Activated CD8-positive, alpha-beta T cell treated with anti-CD3 and anti-CD28 coated beads, Interleukin-2, amount 10 ng/mL, durations not matched to agents 7 days and 5 days (primary cell): ENCODE measurements at regions of chr15 and their contacts with region 1.

Region 1: DNA sequence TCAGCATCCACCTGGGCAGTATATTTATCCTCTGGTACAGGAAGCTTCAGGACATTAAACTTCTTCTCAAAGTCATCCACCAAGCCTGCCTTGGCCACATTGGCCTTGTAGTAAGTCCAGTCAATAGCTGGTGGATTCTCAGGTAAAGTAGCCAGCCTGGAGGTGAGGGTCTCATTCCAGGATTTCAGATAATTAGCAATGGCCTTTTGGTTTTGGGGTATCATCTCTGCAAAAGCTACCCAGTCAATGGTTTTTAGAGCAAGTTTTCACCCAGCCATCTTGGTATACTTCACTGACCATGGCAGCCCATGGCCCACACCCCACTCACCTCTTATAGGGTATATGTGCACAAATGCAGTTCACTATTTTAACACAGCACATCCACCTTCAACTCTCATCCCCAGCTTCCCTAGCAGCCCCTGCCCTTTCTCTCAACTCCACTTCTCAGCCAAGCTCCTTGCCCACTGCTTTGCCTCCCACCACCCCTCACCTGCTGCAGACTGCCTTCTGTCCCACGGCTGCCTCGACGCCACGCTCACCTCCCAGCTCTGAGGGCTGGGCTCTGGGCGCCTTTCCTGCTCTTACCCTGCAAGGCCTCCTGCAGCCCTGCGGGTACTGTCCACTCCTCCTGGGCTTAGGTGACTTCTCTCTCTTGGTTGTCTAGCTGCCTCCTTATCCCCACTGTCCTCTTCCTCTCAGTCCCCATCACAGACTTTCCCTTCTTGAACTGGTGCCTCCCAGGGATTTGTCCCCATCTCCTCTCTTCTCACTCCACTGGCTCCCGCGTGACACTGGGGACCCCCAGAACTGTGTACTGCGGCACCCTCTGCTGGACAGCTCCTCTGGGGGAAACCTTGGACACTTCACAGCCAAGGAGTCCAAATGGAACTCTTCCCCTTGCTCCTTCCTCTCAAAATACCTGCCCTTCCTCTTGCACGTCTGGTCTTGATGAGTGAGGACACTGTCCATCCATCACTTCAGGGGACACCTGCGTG is 1.7 kb upstream of the TGM5 start:
- DNase-seq: peak; percentile 63
- ATAC-seq: peak; percentile 59
- H3K4me3 Mint-ChIP-seq: no peak overlapping the region
- H3K27ac Mint-ChIP-seq: no peak overlapping the region
- H3K4me1 Mint-ChIP-seq: peaks cover 22% of the 10 kb centered on the region
- H3K27me3 Mint-ChIP-seq: peaks cover 28% of the 10 kb centered on the region

Region 2: GRCh38 chr15:43185157-43186017 is 83.0 kb before region 1 on chr15 and contains the start of gene CCNDBP1:
- CTCF ChIA-PET with region 1: no interaction called
- POLR2A ChIA-PET with region 1: no interaction called
- DNase-seq: peak; percentile 95
- ATAC-seq: peak; percentile 94
- H3K4me3 Mint-ChIP-seq: peak within 1 kb of the TSS; percentile 93
- H3K27ac Mint-ChIP-seq: peak within 1 kb of the TSS; percentile 96
- H3K4me1 Mint-ChIP-seq: peaks cover 37% of the 10 kb centered on the region
- H3K27me3 Mint-ChIP-seq: no peaks in the 10 kb centered on the region
- total RNA-seq, gene CCNDBP1: 58.0 to 63.2 TPM

Region 3: DNA sequence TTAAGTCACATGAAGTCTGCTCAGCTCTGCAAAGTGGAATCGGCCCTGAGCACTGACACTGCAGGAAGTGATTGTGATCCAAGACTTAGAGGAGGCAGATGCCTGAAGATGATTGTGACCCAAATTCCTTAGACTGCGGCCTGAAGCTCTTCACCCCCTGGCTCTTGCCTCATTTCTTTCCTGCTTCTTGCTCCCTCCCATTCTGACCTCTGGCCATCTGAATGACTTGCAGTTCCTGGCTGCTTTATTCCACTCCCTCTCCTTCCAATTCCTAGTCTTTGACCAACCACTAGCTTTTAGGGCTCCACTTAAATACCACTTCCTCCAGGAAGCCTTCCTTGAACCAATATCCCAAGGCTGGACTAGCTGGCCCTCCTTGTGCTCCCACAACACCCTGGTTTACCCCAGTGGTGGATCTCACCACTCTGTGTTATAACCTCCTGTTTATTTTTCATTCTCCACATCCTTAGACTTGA is 37.7 kb before region 1 on chr15:
- CTCF ChIA-PET with region 1: interaction called, 155 read pairs
- POLR2A ChIA-PET with region 1: interaction called, 3 read pairs
- DNase-seq: no peak
- ATAC-seq: no peak
- H3K4me3 Mint-ChIP-seq: no peak overlapping the region
- H3K27ac Mint-ChIP-seq: no peak overlapping the region
- H3K4me1 Mint-ChIP-seq: peaks cover 17% of the 10 kb centered on the region
- H3K27me3 Mint-ChIP-seq: peaks cover 7% of the 10 kb centered on the region